Adrenal gland (tissue), 19 donors: ENCODE measurements at regions of chr3 and their contacts with region 1.

Region 1: DNA sequence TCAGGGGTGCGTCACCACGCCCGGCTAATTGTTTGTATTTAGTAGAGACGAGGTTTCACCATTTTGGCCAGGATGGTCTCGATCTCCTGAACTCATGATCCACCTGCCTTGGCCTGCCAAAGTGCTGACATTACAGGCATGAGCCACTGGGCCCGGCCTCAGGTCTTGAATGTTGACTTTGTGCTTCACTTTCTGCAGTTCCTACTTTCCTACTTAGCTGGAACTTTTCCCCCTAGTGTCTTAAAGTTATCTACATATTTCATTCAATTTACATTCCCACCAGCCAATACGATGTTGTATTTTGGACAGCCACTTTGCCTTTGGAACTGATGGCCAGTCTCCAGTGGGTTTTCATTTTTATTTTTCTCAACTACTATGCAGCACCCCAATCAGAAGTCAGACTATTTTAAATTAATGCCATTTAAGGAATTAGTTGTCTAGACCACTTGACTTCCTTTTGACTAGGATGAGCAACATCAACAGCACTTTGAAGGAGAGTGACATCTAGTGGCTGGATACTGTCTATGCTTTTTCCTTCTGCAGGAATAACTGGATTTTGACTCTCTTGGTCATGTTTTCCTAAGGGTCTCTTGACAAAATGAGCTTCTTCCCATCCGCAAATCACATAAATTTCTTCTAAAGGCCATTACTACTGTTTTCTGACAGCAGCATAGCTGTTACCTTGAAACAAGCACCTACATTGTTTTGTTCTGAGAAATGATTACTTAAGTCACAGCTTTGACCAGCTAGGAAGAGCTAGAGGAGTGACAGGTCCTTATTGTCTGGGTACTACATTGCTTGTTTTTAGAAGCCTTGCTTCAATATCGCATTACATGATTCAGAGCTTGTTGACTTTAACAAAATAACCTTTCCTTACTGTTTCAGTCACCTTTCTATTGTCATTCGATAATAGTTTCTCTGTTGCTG is 140.2 kb downstream of the ITPR1 start:
- DNase-seq: peak in 1 of 7 donors; percentile 9
- H3K4me3 ChIP-seq: no peak overlapping the region
- H3K27ac ChIP-seq: no peak overlapping the region
- H3K4me1 ChIP-seq: no peaks in the 10 kb centered on the region
- H3K27me3 ChIP-seq: no peaks in the 10 kb centered on the region
- CTCF ChIP-seq: peak; percentile 78 to 94 (median 89)
- POLR2A ChIP-seq: no peak

Region 2: DNA sequence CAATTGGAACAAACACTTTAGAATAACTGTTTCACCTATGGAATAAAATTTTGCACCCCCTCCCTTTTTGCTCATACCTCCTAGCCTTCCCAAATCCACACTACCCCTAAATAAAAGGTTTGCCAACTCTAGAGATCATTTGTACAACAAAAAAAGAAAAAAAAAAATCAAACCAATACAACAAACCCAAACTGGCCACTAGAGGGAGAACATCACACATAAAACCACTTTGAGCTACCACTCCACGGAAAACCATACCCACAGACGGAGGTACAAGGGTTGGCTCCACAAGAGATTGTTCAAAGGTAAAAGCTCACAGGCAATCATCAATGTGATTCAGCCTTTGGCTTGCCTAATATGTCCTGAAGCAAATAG is 282.6 kb before region 1 on chr3:
- intact Hi-C with region 1: loop called (anchors 5 kb)
- DNase-seq: peak; percentile 47 to 74 (median 61)
- H3K4me3 ChIP-seq: peak overlapping the region in 2 of 4 donors; percentile 10 to 37
- H3K27ac ChIP-seq: peak overlapping the region in 3 of 5 donors; percentile 9 to 58 (median 43)
- H3K4me1 ChIP-seq: peaks cover 11 to 27% of the 10 kb centered on the region in 2 donors
- H3K27me3 ChIP-seq: no peaks in the 10 kb centered on the region
- CTCF ChIP-seq: peak; percentile 61 to 97 (median 88)
- POLR2A ChIP-seq: no peak

Region 3: GRCh38 chr3:4376499-4376898 is 256.8 kb before region 1 on chr3:
- intact Hi-C with region 1: no loop called
- DNase-seq: no peak
- H3K4me3 ChIP-seq: no peak overlapping the region
- H3K27ac ChIP-seq: no peak overlapping the region
- H3K4me1 ChIP-seq: no peaks in the 10 kb centered on the region
- H3K27me3 ChIP-seq: no peaks in the 10 kb centered on the region
- CTCF ChIP-seq: no peak
- POLR2A ChIP-seq: no peak

Region 4: GRCh38 chr3:4474683-4475490 is 158.5 kb before region 1 on chr3:
- intact Hi-C with region 1: loop called in 1 of 2 experiments (anchors 10 kb)
- DNase-seq: peak; percentile 66 to 83 (median 69)
- H3K4me3 ChIP-seq: no peak overlapping the region
- H3K27ac ChIP-seq: peak overlapping the region in 3 of 5 donors; percentile 51 to 61 (median 58)
- H3K4me1 ChIP-seq: peaks cover 3 to 13% of the 10 kb centered on the region in 2 donors
- H3K27me3 ChIP-seq: no peaks in the 10 kb centered on the region
- CTCF ChIP-seq: no peak
- POLR2A ChIP-seq: no peak

Region 5: DNA sequence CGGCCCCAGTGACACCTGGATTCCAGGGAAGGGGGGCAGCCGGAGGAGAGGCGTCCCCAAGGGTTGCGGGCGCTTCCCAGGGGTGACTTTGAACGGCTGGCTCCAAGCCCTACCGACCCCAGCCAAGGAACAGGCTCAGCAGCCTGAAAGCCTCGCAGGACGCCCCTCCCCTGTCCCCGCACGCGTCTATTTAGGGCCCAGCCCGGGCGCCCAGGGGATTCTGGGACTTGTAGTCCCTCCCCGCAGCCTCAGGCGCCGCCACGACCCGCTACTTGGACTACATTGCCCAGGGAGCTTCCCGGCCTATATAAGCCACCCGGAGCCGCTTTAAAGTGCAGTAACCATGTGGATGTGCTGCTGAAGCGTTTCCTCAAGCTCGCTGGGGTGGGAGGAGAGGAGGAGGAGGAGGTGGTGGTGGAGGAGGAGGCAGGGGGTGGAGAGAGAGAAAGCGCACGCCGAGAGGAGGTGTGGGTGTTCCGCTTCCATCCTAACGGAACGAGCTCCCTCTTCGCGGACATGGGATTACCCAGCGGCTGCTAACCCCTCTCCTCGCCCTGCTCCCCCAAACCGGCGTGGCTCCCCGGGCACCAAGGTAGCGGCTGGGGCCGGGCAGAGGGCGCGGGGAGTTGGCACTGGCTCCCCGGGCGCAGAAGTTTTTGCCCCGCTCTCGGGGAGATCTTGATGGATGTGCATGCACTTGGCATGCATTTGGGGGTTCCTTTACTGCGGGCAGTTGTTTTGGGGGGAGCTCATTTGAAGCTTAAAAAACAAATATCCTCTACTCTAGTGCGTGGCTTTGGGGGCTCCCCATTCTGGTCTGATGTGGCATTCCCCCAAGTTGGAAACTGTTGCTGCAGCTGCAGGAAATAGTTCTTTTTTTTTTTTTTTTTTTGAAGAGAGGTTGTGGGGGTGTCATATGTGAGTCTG is 140.1 kb before region 1 on chr3 and contains the start of gene ITPR1:
- intact Hi-C with region 1: loop called in 1 of 2 experiments (anchors 10 kb)
- DNase-seq: peak; percentile 98 to 100 (median 99)
- H3K4me3 ChIP-seq: peak within 1 kb of the TSS; percentile 56 to 81 (median 73)
- H3K27ac ChIP-seq: peak within 1 kb of the TSS; percentile 64 to 90 (median 83)
- H3K4me1 ChIP-seq: peaks cover 8 to 48% of the 10 kb centered on the region in 2 donors
- H3K27me3 ChIP-seq: no peaks in the 10 kb centered on the region
- CTCF ChIP-seq: no peak
- POLR2A ChIP-seq: peak; percentile 99 to 100
- total RNA-seq, gene ITPR1: 55.8 to 198 (median 82.2) TPM